Mammary epithelial cell (primary cell): ENCODE measurements at regions of chr7 and their contacts with region 1.

Region 1: DNA sequence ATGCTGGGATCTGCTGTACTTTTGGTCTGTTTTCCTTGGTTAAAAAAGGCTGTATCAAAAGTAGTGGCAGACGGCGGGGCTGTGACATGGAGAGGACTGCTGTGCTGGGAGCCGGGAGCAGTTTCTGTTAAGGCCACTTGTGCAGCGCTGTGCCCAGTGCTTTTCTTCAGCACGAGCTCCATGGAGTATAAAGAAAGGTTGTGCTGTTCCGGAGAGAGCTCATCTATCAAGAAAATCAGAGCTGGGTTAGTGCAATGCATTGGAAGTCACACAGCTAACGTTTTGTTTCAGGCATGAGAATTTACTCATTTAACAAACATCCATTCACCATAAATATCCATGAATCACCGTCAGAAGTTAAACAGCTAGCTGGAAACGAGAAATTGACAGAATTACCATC is 62.0 kb downstream of the KIAA1549 start:
- DNase-seq: no peak
- H3K4me3 ChIP-seq: no peak overlapping the region
- H3K27ac ChIP-seq: no peak overlapping the region
- H3K4me1 ChIP-seq: no peaks in the 10 kb centered on the region
- H3K27me3 ChIP-seq: no peaks in the 10 kb centered on the region
- CTCF ChIP-seq: no peak

Region 2: GRCh38 chr7:138970952-138971351 is 51.7 kb after region 1 on chr7:
- CTCF ChIA-PET with region 1: no interaction called
- dilution Hi-C with region 1: loop called (anchors 5 kb)
- in situ Hi-C with region 1: no loop called
- intact Hi-C with region 1: no loop called
- DNase-seq: no peak
- H3K4me3 ChIP-seq: no peak overlapping the region
- H3K27ac ChIP-seq: no peak overlapping the region
- H3K4me1 ChIP-seq: no peaks in the 10 kb centered on the region
- H3K27me3 ChIP-seq: no peaks in the 10 kb centered on the region
- CTCF ChIP-seq: no peak